Panc1 (cell line): ENCODE measurements at regions of chr13 and their contacts with region 1.

Region 1: GRCh38 chr13:106917673-106918556 is 350.0 kb upstream of the ARGLU1 start:
- DNase-seq: peak; percentile 5
- ATAC-seq: peak; percentile 99
- H3K4me3 ChIP-seq: peak overlapping the region; percentile 52 to 55
- H3K27ac ChIP-seq: peak overlapping the region; percentile 57
- H3K4me1 ChIP-seq: no peaks in the 10 kb centered on the region
- H3K27me3 ChIP-seq: no peaks in the 10 kb centered on the region
- CTCF ChIP-seq: peak; percentile 86

Region 2: GRCh38 chr13:106567474-106568298 is 350.2 kb before region 1 on chr13 and contains the start of gene ARGLU1:
- CTCF ChIA-PET with region 1: interaction called, 6 read pairs
- POLR2A ChIA-PET with region 1: no interaction called
- in situ Hi-C with region 1: no loop called
- intact Hi-C with region 1: loop called (anchors 5 kb)
- DNase-seq: peak; percentile 38
- ATAC-seq: peak; percentile 94
- H3K4me3 ChIP-seq: peak within 1 kb of the TSS; percentile 69 to 84
- H3K27ac ChIP-seq: peak within 1 kb of the TSS; percentile 86
- H3K4me1 ChIP-seq: peaks cover 30% of the 10 kb centered on the region
- H3K27me3 ChIP-seq: no peaks in the 10 kb centered on the region
- CTCF ChIP-seq: no peak
- total RNA-seq, gene ARGLU1: 38.5 TPM

Region 3: GRCh38 chr13:107124129-107124718 is 206.3 kb after region 1 on chr13:
- CTCF ChIA-PET with region 1: no interaction called
- POLR2A ChIA-PET with region 1: no interaction called
- in situ Hi-C with region 1: no loop called
- intact Hi-C with region 1: loop called (anchors 5 kb)
- DNase-seq: no peak
- ATAC-seq: no peak
- H3K4me3 ChIP-seq: no peak overlapping the region
- H3K27ac ChIP-seq: no peak overlapping the region
- H3K4me1 ChIP-seq: no peaks in the 10 kb centered on the region
- H3K27me3 ChIP-seq: no peaks in the 10 kb centered on the region
- CTCF ChIP-seq: peak; percentile 42; the same call in 1 of the 2 replicates